Mammary epithelial cell (primary cell): ENCODE measurements at regions of chr3 and their contacts with region 1.

Region 1: GRCh38 chr3:102229062-102229655 is 205.7 kb upstream of the ZPLD1 start:
- DNase-seq: peak; percentile 71
- H3K4me3 ChIP-seq: no peak overlapping the region
- H3K27ac ChIP-seq: no peak overlapping the region
- H3K4me1 ChIP-seq: peaks cover 2% of the 10 kb centered on the region
- H3K27me3 ChIP-seq: no peaks in the 10 kb centered on the region
- CTCF ChIP-seq: peak; percentile 92 to 97

Region 2: DNA sequence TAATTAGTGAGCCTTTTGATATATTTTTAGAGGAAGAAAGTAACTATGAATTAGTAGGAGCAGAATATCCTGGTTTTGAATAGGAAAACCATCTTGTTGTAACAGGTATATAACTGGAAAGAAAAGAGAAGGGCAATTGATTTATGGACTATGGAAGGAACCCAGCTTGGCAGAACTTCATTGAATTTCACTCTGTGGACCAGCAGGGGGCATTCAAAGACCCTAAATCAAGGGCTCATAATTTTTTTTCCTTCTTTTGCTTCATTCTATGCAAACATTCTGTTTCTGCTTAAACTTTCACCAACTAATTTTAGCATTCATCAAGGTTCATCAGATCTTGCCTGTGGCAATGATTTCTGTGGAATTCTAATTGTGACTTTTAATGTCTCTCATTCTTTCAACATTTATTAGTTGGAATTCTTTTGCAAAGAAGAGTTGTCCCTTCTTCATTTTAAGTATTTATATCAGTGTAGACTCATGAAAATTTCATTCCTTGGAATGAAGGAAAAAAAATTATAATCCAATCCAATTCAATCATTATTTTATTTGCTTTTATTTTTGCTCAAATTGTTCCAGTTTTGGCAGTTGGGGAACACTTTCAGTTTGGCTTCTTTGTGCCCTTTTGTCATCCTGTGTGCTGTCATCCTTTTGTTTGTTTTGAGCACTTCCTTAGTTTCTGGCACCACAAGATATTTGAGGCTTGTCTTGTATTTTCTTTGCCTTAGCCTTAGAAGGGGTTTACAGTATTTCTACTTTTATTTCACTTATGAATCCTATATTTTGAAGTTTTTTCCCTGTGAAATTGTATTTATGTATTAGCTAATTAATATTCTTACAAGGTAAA is 419.8 kb before region 1 on chr3:
- CTCF ChIA-PET with region 1: interaction called, 5 read pairs
- dilution Hi-C with region 1: loop called (anchors 5 kb)
- in situ Hi-C with region 1: loop called (anchors 5 kb)
- intact Hi-C with region 1: loop called (anchors 1 kb)
- DNase-seq: no peak
- H3K4me3 ChIP-seq: no peak overlapping the region
- H3K27ac ChIP-seq: no peak overlapping the region
- H3K4me1 ChIP-seq: peaks cover 5% of the 10 kb centered on the region
- H3K27me3 ChIP-seq: no peaks in the 10 kb centered on the region
- CTCF ChIP-seq: peak; percentile 59 to 60

Region 3: GRCh38 chr3:101902041-101902440 is 327.1 kb before region 1 on chr3:
- CTCF ChIA-PET with region 1: interaction called, 4 read pairs
- dilution Hi-C with region 1: no loop called
- in situ Hi-C with region 1: no loop called
- intact Hi-C with region 1: loop called (anchors 1 kb)
- DNase-seq: peak; percentile 98
- H3K4me3 ChIP-seq: no peak overlapping the region
- H3K27ac ChIP-seq: peak overlapping the region; percentile 78
- H3K4me1 ChIP-seq: peaks cover 6% of the 10 kb centered on the region
- H3K27me3 ChIP-seq: no peaks in the 10 kb centered on the region
- CTCF ChIP-seq: no peak

Region 4: GRCh38 chr3:101963902-101964362 is 265.2 kb before region 1 on chr3:
- CTCF ChIA-PET with region 1: no interaction called
- dilution Hi-C with region 1: no loop called
- in situ Hi-C with region 1: no loop called
- intact Hi-C with region 1: no loop called
- DNase-seq: peak; percentile 76
- H3K4me3 ChIP-seq: no peak overlapping the region
- H3K27ac ChIP-seq: no peak overlapping the region
- H3K4me1 ChIP-seq: peaks cover 14% of the 10 kb centered on the region
- H3K27me3 ChIP-seq: no peaks in the 10 kb centered on the region
- CTCF ChIP-seq: no peak

Region 5: GRCh38 chr3:102053375-102053989 is 175.7 kb before region 1 on chr3:
- CTCF ChIA-PET with region 1: no interaction called
- dilution Hi-C with region 1: no loop called
- in situ Hi-C with region 1: no loop called
- intact Hi-C with region 1: loop called (anchors 10 kb)
- DNase-seq: peak; percentile 92
- H3K4me3 ChIP-seq: no peak overlapping the region
- H3K27ac ChIP-seq: peak overlapping the region; percentile 39
- H3K4me1 ChIP-seq: peaks cover 14% of the 10 kb centered on the region
- H3K27me3 ChIP-seq: no peaks in the 10 kb centered on the region
- CTCF ChIP-seq: no peak

Region 6: DNA sequence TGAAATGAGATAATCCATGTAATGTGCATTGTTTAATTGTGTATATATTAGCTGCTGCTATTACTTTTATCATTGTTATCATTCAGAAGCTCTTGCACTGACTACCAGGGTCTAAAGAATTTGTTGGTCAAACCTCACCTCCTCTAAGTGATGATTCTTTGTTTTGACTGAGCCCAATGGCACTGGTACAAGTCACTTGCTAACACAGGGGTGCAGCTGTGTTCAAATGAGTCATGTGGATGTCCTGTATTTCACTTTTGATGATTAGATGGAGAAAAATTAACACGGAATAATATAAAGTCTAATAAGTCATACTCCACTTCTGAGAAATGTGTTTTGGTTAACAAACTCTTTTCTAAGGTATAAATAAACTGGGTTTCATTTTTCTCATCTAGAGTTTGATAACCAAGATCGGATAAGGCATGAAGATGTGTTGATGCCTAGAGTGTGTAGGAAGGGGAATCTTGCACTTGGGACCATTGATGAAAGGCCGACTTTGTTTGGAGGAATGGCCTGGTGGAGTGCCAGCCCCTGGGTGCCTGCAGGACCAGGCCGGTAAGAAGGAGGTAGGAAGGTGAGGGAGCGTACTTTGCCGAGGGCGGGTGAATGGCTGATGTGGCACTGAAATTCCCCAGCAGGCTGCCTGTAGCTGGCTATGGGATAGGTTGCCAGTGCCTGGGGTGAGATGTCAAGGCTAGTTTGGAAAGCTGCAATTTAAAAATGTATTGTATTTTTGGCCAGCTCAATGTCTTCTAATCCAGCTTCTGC is 39.0 kb before region 1 on chr3:
- CTCF ChIA-PET with region 1: interaction called, 3 read pairs
- dilution Hi-C with region 1: no loop called
- in situ Hi-C with region 1: no loop called
- intact Hi-C with region 1: loop called (anchors 2 kb)
- DNase-seq: peak; percentile 83
- H3K4me3 ChIP-seq: peak overlapping the region; percentile 5 to 22 (median 10)
- H3K27ac ChIP-seq: peak overlapping the region; percentile 94
- H3K4me1 ChIP-seq: peaks cover 67% of the 10 kb centered on the region
- H3K27me3 ChIP-seq: no peaks in the 10 kb centered on the region
- CTCF ChIP-seq: peak in 1 of 2 donors; percentile 7

Region 7: GRCh38 chr3:102400766-102401165 is 171.6 kb after region 1 on chr3:
- CTCF ChIA-PET with region 1: no interaction called
- dilution Hi-C with region 1: no loop called
- in situ Hi-C with region 1: no loop called
- intact Hi-C with region 1: no loop called
- DNase-seq: peak; percentile 88
- H3K4me3 ChIP-seq: no peak overlapping the region
- H3K27ac ChIP-seq: peak overlapping the region; percentile 79
- H3K4me1 ChIP-seq: peaks cover 21% of the 10 kb centered on the region
- H3K27me3 ChIP-seq: no peaks in the 10 kb centered on the region
- CTCF ChIP-seq: no peak

Region 8: GRCh38 chr3:102536456-102536855 is 307.3 kb after region 1 on chr3:
- CTCF ChIA-PET with region 1: interaction called, 38 read pairs
- dilution Hi-C with region 1: no loop called
- in situ Hi-C with region 1: loop called (anchors 5 kb)
- intact Hi-C with region 1: loop called (anchors 1 kb)
- DNase-seq: peak; percentile 39
- H3K4me3 ChIP-seq: no peak overlapping the region
- H3K27ac ChIP-seq: no peak overlapping the region
- H3K4me1 ChIP-seq: no peaks in the 10 kb centered on the region
- H3K27me3 ChIP-seq: no peaks in the 10 kb centered on the region
- CTCF ChIP-seq: peak; percentile 42 to 55